ENCODE measurements at regions of chr5 and their contacts with region 1.

Region 1: DNA sequence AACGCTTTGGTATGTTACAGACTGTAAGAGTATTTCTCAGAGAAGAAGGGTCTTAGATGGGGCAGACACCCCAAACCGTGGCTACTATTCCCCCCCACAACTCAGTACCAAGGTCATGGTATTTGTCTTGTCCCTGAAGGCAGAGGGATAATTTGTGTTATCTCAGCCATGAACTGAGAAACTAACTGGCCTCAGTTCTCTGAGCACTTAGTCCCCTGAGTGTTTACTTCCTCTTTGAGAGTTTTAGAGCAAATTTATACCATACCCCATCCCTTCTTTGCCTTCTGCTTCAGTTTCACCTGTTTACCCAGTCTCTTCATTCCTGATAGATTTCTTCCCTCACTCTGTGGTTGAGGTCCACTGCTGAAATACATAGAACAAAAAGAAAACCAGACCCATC is 183.9 kb downstream of the LRRC70 start:
- DNase-seq: no peak
- H3K4me3 ChIP-seq: no peak overlapping the region
- H3K27ac ChIP-seq: no peak overlapping the region
- H3K4me1 ChIP-seq: no peaks in the 10 kb centered on the region
- H3K27me3 ChIP-seq: no peaks in the 10 kb centered on the region
- CTCF ChIP-seq: no peak

Region 2: DNA sequence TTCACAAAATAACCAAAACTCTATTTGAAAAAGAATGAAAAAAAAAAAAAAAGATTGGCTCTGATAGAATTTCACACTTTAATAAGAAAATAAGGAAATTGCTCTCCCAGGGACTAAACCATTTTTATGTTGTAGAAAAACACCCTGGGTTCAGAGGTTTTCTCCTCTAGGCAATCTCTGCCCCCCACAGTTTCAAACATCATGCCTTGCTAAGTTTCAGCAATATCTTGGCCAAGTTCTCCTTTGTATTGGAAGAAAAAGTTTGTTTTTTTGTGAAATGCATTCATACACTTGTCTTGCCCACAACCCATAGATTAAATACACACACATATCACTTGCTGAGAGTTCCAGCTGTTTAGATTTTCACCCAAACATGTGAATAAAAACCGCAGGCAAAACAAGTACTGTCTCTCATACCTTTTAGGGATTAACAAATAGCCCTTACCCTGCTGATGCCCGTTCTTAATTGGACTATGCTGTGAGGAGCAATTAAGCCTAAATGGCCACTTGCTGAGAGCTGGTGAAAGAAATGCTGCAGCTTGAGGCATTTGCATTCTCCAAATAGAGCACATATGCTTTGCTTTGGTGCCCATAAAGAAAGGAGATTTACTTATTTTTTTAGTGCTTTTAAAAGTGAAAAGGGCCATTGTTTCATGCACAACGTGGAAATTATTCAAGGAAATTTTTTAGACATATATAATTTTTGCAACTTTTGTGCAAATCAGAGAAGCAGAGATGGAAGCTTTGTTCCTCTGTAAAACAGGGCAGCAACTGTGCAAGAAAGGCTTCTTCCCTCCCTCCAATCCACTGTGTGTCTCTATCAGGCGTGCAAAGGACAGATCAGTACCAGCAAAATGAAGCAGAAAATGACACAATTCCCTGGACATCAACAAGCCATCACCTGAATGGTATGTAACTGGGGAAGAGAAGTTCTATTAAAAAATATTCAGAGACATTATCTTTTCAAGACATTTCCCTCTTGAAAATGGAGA is 718.9 kb before region 1 on chr5:
- intact Hi-C with region 1: loop called (anchors 5 kb)
- DNase-seq: no peak
- H3K4me3 ChIP-seq: no peak overlapping the region
- H3K27ac ChIP-seq: no peak overlapping the region
- H3K4me1 ChIP-seq: no peaks in the 10 kb centered on the region
- H3K27me3 ChIP-seq: no peaks in the 10 kb centered on the region
- CTCF ChIP-seq: no peak